Stomach (tissue), 19 donors: ENCODE measurements at regions of chr14 and their contacts with region 1.

Region 1: GRCh38 chr14:91418387-91419043 is 895 bp upstream of the CCDC88C start:
- DNase-seq: peak; percentile 79 to 84
- H3K4me3 ChIP-seq: peak overlapping the region; percentile 60 to 85 (median 75)
- H3K27ac ChIP-seq: peak overlapping the region; percentile 32 to 93 (median 83)
- H3K4me1 ChIP-seq: peaks cover 9 to 58% (median 45%) of the 10 kb centered on the region in 4 donors
- H3K27me3 ChIP-seq: peaks cover 0 to 14% (median 0%) of the 10 kb centered on the region in 3 donors
- CTCF ChIP-seq: peak in 6 of 7 experiments; percentile 94 to 100 (median 99)
- EP300 ChIP-seq: no peak
- POLR2A ChIP-seq: no peak

Region 2: GRCh38 chr14:91127401-91127854 is 291.1 kb before region 1 on chr14:
- intact Hi-C with region 1: no loop called
- DNase-seq: peak; percentile 83 to 90
- H3K4me3 ChIP-seq: no peak overlapping the region
- H3K27ac ChIP-seq: peak overlapping the region; percentile 71 to 88 (median 83)
- H3K4me1 ChIP-seq: peaks cover 5 to 53% (median 33%) of the 10 kb centered on the region in 4 donors
- H3K27me3 ChIP-seq: no peaks in the 10 kb centered on the region
- CTCF ChIP-seq: no peak
- EP300 ChIP-seq: no peak
- POLR2A ChIP-seq: no peak

Region 3: DNA sequence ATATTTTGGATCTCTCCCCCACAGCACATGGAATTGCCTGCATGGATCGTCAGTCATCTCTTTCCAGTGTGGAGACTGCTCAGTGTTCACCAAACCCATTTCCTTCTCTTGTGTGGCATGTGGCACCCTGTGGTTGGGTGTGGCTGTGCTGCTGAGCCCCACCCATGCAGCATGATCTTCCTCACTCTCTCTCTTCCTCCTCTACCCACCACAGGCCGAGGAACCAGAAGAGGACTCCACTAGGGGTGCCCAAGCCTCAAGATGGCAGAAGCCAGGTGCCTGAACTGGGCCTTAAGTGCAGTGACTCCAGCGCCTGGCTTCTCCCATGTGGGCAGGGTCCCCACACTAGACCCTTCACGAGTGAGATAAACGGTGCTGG is 107.2 kb before region 1 on chr14:
- intact Hi-C with region 1: no loop called
- DNase-seq: peak in 1 of 2 donors; percentile 45
- H3K4me3 ChIP-seq: no peak overlapping the region
- H3K27ac ChIP-seq: no peak overlapping the region
- H3K4me1 ChIP-seq: peaks cover under 1 to 13% (median 10%) of the 10 kb centered on the region in 4 donors
- H3K27me3 ChIP-seq: no peaks in the 10 kb centered on the region
- CTCF ChIP-seq: no peak
- EP300 ChIP-seq: no peak
- POLR2A ChIP-seq: no peak

Region 4: GRCh38 chr14:91323671-91324605 is 94.6 kb before region 1 on chr14:
- intact Hi-C with region 1: loop called (anchors 5 kb)
- DNase-seq: peak; percentile 90 to 93
- H3K4me3 ChIP-seq: peak overlapping the region in 3 of 4 donors; percentile 28 to 36 (median 34)
- H3K27ac ChIP-seq: peak overlapping the region; percentile 53 to 80 (median 61)
- H3K4me1 ChIP-seq: peaks cover 21 to 46% (median 28%) of the 10 kb centered on the region in 4 donors
- H3K27me3 ChIP-seq: no peaks in the 10 kb centered on the region
- CTCF ChIP-seq: peak in 6 of 7 experiments; percentile 84 to 97 (median 96)
- EP300 ChIP-seq: no peak
- POLR2A ChIP-seq: no peak

Region 5: GRCh38 chr14:91350813-91351511 is 67.6 kb before region 1 on chr14:
- intact Hi-C with region 1: loop called (anchors 10 kb)
- DNase-seq: peak in 1 of 2 donors; percentile 76
- H3K4me3 ChIP-seq: peak overlapping the region; percentile 21 to 37 (median 29)
- H3K27ac ChIP-seq: peak overlapping the region; percentile 29 to 86 (median 59)
- H3K4me1 ChIP-seq: peaks cover 37 to 72% (median 63%) of the 10 kb centered on the region in 4 donors
- H3K27me3 ChIP-seq: no peaks in the 10 kb centered on the region
- CTCF ChIP-seq: no peak
- EP300 ChIP-seq: no peak
- POLR2A ChIP-seq: no peak